ENCODE measurements at regions of chr2 and their contacts with region 1.

Region 1: GRCh38 chr2:28445448-28446258 is 50.2 kb upstream of the PLB1 start:
- DNase-seq: peak; percentile 86
- H3K4me3 Mint-ChIP-seq: peak overlapping the region; percentile 14
- H3K27ac Mint-ChIP-seq: peak overlapping the region; percentile 99
- H3K4me1 Mint-ChIP-seq: peaks cover 82% of the 10 kb centered on the region
- H3K27me3 Mint-ChIP-seq: peaks cover 4% of the 10 kb centered on the region

Region 2: DNA sequence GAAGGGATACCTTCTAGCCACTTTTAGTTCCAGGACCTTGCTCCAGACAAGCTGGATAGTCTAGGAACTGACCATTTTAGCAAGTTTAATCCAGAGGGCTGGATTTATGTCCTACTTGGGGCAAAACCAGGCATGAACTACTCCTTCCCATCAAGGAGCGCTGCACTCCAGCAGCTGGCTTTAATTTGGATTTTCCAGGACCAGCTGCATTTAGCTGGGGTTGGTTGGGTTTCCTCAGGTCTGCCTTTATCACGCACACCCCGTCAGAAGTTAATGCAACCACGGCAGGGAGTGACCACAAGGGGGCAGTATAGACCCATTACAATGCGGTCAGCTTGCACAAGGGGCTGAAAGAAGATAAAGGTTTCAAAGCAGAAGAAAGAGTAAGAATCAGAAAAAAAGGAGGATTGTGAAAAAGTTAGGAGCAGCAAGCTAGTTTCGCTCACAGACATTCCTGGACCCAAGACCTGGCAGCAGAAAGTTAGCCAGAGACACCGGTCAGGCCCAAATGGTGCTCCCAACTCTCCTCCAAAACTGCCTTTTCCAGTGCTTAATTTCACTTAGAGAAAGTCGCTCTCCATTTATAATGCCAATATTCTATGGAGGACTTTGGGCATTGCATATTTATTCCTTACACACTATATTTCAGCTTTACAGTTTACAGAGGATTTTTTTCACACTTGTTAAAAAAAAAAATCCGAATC is 741.9 kb before region 1 on chr2:
- CTCF ChIA-PET with region 1: interaction called, 17 read pairs
- POLR2A ChIA-PET with region 1: no interaction called
- intact Hi-C with region 1: loop called (anchors 5 kb)
- DNase-seq: peak; percentile 92
- H3K4me3 Mint-ChIP-seq: no peak overlapping the region
- H3K27ac Mint-ChIP-seq: peak overlapping the region; percentile 10
- H3K4me1 Mint-ChIP-seq: peaks cover 26% of the 10 kb centered on the region
- H3K27me3 Mint-ChIP-seq: no peaks in the 10 kb centered on the region

Region 3: DNA sequence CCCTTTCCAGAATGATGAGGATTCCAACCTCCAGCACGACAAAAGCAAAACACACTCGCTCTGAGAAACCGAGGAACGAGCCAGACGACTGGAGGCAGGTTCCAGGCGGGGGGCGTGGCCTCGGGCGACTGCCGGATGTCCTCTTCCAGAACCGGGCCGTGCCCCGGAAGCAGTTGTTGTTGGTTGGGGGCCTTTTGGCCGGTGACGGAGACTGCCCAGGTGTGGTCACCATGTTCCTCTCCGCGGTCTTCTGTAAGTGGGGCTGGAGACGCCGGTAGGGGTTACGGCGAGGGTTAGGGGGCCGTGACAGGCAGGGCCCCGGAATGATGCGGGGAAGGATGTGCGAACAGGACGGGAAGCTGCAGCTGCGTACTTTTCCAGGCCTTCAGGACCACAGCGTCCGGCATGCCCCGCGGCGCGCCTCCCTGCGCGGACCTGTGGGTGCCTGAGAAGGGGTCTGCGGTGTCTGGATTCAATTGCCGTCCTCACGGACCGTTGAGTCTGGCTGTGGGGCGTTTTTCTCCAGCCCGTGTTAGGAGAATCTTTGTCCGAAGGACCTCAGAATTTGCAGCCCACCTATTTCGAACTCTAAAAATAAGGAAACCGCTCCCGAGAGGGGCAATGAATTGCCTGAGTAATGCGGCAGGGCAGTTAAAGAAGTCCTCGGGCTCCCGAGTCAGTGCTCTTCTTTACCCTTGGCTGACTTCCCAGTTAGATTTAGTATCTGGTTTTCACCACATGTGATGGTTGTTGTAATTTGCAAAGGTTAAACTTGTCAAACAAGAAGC is 673.9 kb before region 1 on chr2 and contains the start of gene MRPL33:
- CTCF ChIA-PET with region 1: no interaction called
- POLR2A ChIA-PET with region 1: no interaction called
- intact Hi-C with region 1: loop called (anchors 5 kb)
- DNase-seq: peak; percentile 95
- H3K4me3 Mint-ChIP-seq: peak within 1 kb of the TSS; percentile 100
- H3K27ac Mint-ChIP-seq: peak within 1 kb of the TSS; percentile 97
- H3K4me1 Mint-ChIP-seq: peaks cover 38% of the 10 kb centered on the region
- H3K27me3 Mint-ChIP-seq: no peaks in the 10 kb centered on the region
- total RNA-seq, gene MRPL33: 83.3 to 84.2 TPM

Region 4: DNA sequence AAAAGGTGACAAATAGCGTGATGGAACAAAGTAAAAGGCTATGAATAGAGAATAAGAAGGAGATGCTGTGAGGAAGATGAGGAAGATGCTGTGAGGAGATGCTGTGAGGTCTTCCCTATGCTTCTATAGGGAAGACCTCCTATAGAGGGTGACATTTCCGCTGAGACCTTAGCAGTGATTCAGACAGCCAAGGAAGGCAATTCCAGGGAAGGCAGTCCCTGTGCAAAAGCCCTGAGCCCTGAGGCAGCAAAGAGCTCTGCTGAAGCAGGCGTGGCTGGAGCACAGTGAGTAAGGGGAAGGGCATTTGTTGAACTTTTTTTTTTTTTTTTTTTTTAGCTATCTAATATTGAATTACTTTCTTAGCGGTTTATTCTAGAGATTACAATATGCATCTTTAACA is 195.6 kb before region 1 on chr2:
- CTCF ChIA-PET with region 1: no interaction called
- POLR2A ChIA-PET with region 1: no interaction called
- intact Hi-C with region 1: loop called (anchors 1 kb)
- DNase-seq: no peak
- H3K4me3 Mint-ChIP-seq: no peak overlapping the region
- H3K27ac Mint-ChIP-seq: no peak overlapping the region
- H3K4me1 Mint-ChIP-seq: peaks cover 48% of the 10 kb centered on the region
- H3K27me3 Mint-ChIP-seq: no peaks in the 10 kb centered on the region

Region 5: GRCh38 chr2:28465148-28465885 is 19.7 kb after region 1 on chr2:
- CTCF ChIA-PET with region 1: interaction called, 3 read pairs
- POLR2A ChIA-PET with region 1: interaction called, 5 read pairs
- intact Hi-C with region 1: loop called (anchors 1 kb)
- DNase-seq: no peak
- H3K4me3 Mint-ChIP-seq: no peak overlapping the region
- H3K27ac Mint-ChIP-seq: peak overlapping the region; percentile 75
- H3K4me1 Mint-ChIP-seq: peaks cover 38% of the 10 kb centered on the region
- H3K27me3 Mint-ChIP-seq: peaks cover 14% of the 10 kb centered on the region